Mammary epithelial cell (primary cell): ENCODE measurements at regions of chr4 and their contacts with region 1.

Region 1: GRCh38 chr4:140252742-140253555 is 99.0 kb upstream of the MAML3 start:
- DNase-seq: peak; percentile 58
- H3K4me3 ChIP-seq: peak overlapping the region; percentile 32 to 66 (median 52)
- H3K27ac ChIP-seq: no peak overlapping the region
- H3K4me1 ChIP-seq: peaks cover 17% of the 10 kb centered on the region
- H3K27me3 ChIP-seq: no peaks in the 10 kb centered on the region
- CTCF ChIP-seq: peak; percentile 60 to 84

Region 2: DNA sequence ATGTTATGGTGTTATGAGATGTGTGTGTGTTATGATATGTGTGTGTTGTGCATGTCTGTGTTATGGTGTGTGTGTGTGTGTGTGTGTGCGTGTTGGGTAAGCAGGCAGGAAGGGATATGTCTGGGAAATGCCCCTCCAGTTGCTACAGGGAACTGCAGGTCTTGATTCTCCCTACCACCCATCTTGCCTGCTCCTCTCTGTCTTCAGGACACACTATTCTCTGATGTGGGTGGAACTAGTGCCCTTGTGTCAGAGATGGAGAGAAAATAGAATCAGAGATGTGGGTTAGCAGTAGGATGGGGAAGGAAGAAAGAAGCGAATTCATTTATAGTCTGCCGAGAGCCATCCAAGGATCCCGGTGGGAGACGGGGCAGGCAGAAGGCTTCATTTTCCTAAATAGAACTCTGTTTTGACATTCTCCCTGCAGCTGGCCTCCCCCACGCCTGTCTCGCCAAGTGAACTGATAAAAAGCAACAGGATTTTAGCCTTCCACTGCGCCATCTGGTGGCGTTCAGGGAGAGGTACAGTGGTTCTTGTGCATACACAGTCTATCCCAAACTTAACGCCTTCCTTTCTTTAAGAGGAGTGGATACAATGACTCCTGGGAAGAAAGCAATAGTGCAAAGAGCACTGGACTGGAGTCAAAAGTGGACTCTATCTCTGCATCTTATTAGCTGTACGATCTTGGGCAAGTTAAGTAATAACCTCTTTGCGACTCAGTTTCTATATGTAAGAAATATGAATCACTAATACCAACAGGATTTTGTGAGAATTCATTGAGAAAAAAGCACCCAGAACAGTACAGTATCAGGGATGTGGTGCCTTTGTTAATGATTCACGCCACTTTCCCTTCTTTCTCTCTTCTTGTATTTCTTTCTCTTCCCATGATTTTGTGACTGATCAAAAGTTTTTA is 601.4 kb before region 1 on chr4:
- CTCF ChIA-PET with region 1: no interaction called
- dilution Hi-C with region 1: no loop called
- in situ Hi-C with region 1: loop called in 1 of 2 experiments (anchors 25 kb)
- intact Hi-C with region 1: no loop called
- DNase-seq: peak; percentile 43
- H3K4me3 ChIP-seq: no peak overlapping the region
- H3K27ac ChIP-seq: no peak overlapping the region
- H3K4me1 ChIP-seq: peaks cover 8% of the 10 kb centered on the region
- H3K27me3 ChIP-seq: no peaks in the 10 kb centered on the region
- CTCF ChIP-seq: peak; percentile 91 to 95

Region 3: DNA sequence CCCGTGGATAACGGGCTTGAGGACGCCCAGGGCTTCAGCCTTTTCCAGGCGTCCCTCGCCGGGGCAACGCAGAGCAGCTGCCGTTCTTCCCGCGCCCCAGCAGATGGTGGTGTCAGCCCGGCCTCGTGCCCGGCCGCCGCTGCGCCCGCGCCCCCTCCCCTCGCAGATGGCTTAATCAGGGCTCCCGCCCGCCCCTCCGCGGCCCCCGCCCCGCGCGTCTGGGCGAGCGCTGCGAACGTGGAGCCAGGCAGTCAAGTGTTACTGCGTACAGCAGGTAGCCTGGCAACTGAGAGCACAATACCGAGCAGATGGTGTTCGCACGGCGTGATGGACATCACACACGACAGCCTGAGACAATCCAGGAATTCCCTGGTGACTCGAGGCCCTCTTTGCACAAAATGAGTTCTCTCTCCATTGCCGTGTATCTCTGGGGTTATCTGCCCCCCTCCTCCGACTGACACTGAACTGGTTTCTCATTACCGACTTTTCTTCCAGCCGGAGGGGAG is 518.0 kb before region 1 on chr4:
- CTCF ChIA-PET with region 1: no interaction called
- dilution Hi-C with region 1: no loop called
- in situ Hi-C with region 1: no loop called
- intact Hi-C with region 1: loop called (anchors 1 kb)
- DNase-seq: peak; percentile 64
- H3K4me3 ChIP-seq: peak overlapping the region; percentile 35 to 36 (median 35)
- H3K27ac ChIP-seq: no peak overlapping the region
- H3K4me1 ChIP-seq: peaks cover 9% of the 10 kb centered on the region
- H3K27me3 ChIP-seq: peaks cover 12% of the 10 kb centered on the region
- CTCF ChIP-seq: peak; percentile 22 to 67

Region 4: GRCh38 chr4:140012688-140013486 is 240.1 kb before region 1 on chr4:
- CTCF ChIA-PET with region 1: no interaction called
- dilution Hi-C with region 1: no loop called
- in situ Hi-C with region 1: loop called in 1 of 2 experiments (anchors 10 kb)
- intact Hi-C with region 1: loop called (anchors 1 kb)
- DNase-seq: peak; percentile 71
- H3K4me3 ChIP-seq: no peak overlapping the region
- H3K27ac ChIP-seq: no peak overlapping the region
- H3K4me1 ChIP-seq: no peaks in the 10 kb centered on the region
- H3K27me3 ChIP-seq: peaks cover 2% of the 10 kb centered on the region
- CTCF ChIP-seq: peak; percentile 62 to 64

Region 5: DNA sequence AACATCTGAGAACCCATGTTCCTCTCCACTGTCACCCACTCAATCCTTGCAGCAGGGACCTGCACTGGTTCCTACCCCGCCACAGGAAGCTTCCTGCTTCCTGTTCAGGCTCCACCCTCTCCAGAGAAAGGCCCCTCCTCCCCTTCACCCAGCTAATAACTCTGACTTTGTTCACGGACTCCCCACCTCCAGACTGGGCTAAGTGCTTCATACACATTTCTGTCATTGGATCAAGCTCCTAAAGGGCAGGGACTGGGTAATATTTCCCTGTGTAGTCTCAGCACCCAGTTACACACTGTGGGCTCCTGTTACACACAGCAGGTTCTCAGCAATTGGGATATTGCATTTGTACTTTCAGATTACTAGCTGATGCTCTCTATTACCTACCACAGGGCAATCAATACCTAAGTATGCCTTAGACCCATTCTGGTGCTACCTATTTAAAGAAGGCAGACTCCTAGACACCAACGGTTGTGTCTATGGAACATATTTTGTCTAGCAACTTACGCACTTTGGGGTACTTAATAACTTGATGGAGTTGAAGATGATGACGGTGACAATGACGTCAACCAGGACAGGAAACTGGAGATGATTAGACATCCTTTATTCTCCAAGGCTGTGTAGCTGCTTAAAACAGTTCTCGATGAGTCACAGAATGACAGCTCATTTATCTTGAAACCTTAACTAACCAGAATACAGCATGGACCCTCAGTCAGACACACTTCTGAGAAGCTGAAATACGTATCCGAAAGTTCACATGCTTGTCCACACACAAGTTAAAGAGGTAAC is 157.1 kb before region 1 on chr4:
- CTCF ChIA-PET with region 1: no interaction called
- dilution Hi-C with region 1: no loop called
- in situ Hi-C with region 1: no loop called
- intact Hi-C with region 1: loop called (anchors 5 kb)
- DNase-seq: peak; percentile 80
- H3K4me3 ChIP-seq: no peak overlapping the region
- H3K27ac ChIP-seq: no peak overlapping the region
- H3K4me1 ChIP-seq: peaks cover 77% of the 10 kb centered on the region
- H3K27me3 ChIP-seq: no peaks in the 10 kb centered on the region
- CTCF ChIP-seq: no peak

Region 6: GRCh38 chr4:140135529-140136088 is 117.3 kb before region 1 on chr4:
- CTCF ChIA-PET with region 1: no interaction called
- dilution Hi-C with region 1: no loop called
- in situ Hi-C with region 1: no loop called
- intact Hi-C with region 1: no loop called
- DNase-seq: no peak
- H3K4me3 ChIP-seq: no peak overlapping the region
- H3K27ac ChIP-seq: no peak overlapping the region
- H3K4me1 ChIP-seq: peaks cover 14% of the 10 kb centered on the region
- H3K27me3 ChIP-seq: no peaks in the 10 kb centered on the region
- CTCF ChIP-seq: no peak

Region 7: DNA sequence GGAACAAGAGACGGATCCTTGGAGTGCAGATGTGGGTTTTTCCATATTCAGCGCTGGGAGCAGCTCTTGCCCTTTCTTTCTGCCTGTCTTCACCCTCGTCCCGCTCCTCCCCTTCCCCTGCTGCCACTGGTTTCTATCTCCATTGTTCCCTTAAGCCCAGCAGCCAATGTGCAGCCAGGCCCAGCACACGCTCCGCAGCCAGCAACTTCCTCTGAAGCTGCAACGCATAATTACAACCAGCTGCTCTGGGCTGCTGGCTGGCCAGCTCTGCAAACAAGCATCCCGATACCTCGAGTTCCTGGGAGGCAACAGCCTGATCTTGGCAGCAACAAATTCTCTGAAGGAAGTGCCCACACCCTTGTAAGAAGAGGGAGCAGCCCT is 15.4 kb before region 1 on chr4:
- CTCF ChIA-PET with region 1: no interaction called
- dilution Hi-C with region 1: no loop called
- in situ Hi-C with region 1: no loop called
- intact Hi-C with region 1: no loop called
- DNase-seq: no peak
- H3K4me3 ChIP-seq: no peak overlapping the region
- H3K27ac ChIP-seq: no peak overlapping the region
- H3K4me1 ChIP-seq: peaks cover 14% of the 10 kb centered on the region
- H3K27me3 ChIP-seq: no peaks in the 10 kb centered on the region
- CTCF ChIP-seq: no peak

Region 8: GRCh38 chr4:140335076-140335475 is 82.1 kb after region 1 on chr4:
- CTCF ChIA-PET with region 1: no interaction called
- dilution Hi-C with region 1: no loop called
- in situ Hi-C with region 1: no loop called
- intact Hi-C with region 1: no loop called
- DNase-seq: no peak
- H3K4me3 ChIP-seq: no peak overlapping the region
- H3K27ac ChIP-seq: no peak overlapping the region
- H3K4me1 ChIP-seq: no peaks in the 10 kb centered on the region
- H3K27me3 ChIP-seq: no peaks in the 10 kb centered on the region
- CTCF ChIP-seq: no peak

Region 9: DNA sequence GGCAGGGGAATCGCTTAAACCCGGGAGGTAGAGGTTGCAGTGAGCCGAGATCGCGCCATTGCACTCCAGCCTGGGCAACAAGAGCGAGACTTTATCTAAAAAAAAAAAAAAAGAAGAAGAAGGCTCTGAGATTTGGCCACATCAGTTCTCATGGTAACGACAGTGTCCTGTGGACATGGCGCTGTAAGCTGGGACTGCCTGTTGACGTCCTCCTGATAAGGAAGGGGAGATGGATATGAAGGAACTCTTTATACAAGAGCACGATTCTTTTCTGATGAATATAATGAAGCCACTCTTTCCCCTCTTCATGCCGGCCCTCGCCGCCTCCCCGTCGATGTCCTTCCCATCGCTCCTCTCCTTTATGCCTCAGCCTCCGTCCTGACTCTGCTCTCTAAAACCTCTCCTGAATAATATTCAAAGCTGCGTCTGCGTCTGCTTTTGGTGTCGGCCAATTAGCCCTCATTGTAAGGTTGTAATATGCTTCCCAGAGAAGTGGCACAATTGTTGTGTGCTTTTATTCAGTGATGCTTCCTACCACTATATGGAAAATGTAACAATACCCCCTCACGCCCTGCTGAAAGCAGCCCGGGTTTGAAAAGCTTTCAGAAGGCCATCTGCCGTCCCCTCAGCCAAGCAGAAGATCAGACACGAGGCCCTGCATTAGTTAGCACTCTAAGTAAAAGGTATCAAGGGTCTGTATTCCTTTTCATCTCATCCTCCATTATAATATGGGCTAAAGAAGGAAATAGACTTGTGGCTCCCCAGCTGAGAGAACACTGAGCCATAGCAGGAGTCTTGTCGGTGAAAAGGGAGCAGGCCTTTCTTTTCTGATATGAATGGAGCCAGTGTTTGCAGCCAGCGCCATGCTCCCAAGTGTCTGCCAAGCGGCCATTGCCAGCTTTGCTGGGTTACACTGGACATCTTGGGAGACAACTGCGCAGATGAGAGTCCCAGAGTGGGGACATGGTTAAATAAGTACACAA is 98.4 kb after region 1 on chr4:
- CTCF ChIA-PET with region 1: no interaction called
- dilution Hi-C with region 1: loop called (anchors 5 kb)
- in situ Hi-C with region 1: no loop called
- intact Hi-C with region 1: no loop called
- DNase-seq: no peak
- H3K4me3 ChIP-seq: no peak overlapping the region
- H3K27ac ChIP-seq: no peak overlapping the region
- H3K4me1 ChIP-seq: no peaks in the 10 kb centered on the region
- H3K27me3 ChIP-seq: peaks cover 7% of the 10 kb centered on the region
- CTCF ChIP-seq: no peak